ENCODE measurements at regions of chr1 and their contacts with region 1.

Region 1: GRCh38 chr1:47179017-47179987 is 10.5 kb downstream of the PDZK1IP1 start:
- DNase-seq: peak; percentile 83
- H3K4me3 ChIP-seq: peak overlapping the region; percentile 61
- H3K27ac ChIP-seq: no peak overlapping the region
- H3K27me3 ChIP-seq: peaks cover 8% of the 10 kb centered on the region
- CTCF ChIP-seq: peak; percentile 96

Region 2: DNA sequence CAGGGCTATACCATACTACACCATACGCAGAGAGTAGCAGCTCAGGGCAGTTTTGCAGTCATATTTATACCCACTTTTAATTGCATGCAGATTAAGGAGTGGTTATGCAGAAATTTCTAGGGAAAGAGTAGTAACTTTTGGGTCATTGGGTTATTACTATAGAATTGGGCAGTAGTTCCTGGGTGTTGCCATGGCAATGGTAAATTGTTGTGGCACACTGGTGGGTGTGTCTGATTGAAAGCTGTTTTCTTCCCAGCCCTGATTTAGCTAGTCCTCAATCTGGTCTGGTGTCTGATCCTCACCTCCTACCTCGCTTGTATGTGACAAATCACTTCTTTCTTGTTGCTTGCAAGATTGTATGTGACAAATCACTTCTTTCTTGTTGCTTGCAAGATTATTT is 268.5 kb before region 1 on chr1:
- CTCF ChIA-PET with region 1: no interaction called
- POLR2A ChIA-PET with region 1: no interaction called
- DNase-seq: no peak
- H3K4me3 ChIP-seq: no peak overlapping the region
- H3K27ac ChIP-seq: no peak overlapping the region
- H3K27me3 ChIP-seq: no peaks in the 10 kb centered on the region
- CTCF ChIP-seq: no peak

Region 3: GRCh38 chr1:47192458-47193384 is 13.4 kb after region 1 on chr1:
- CTCF ChIA-PET with region 1: interaction called, 127 read pairs
- POLR2A ChIA-PET with region 1: interaction called, 5 read pairs
- DNase-seq: peak; percentile 32
- H3K4me3 ChIP-seq: no peak overlapping the region
- H3K27ac ChIP-seq: no peak overlapping the region
- H3K27me3 ChIP-seq: peaks cover 7% of the 10 kb centered on the region
- CTCF ChIP-seq: peak; percentile 96

Region 4: GRCh38 chr1:47257224-47257623 is 77.9 kb after region 1 on chr1:
- CTCF ChIA-PET with region 1: interaction called, 118 read pairs
- POLR2A ChIA-PET with region 1: no interaction called
- DNase-seq: no peak
- H3K4me3 ChIP-seq: no peak overlapping the region
- H3K27ac ChIP-seq: no peak overlapping the region
- H3K27me3 ChIP-seq: no peaks in the 10 kb centered on the region
- CTCF ChIP-seq: no peak

Region 5: DNA sequence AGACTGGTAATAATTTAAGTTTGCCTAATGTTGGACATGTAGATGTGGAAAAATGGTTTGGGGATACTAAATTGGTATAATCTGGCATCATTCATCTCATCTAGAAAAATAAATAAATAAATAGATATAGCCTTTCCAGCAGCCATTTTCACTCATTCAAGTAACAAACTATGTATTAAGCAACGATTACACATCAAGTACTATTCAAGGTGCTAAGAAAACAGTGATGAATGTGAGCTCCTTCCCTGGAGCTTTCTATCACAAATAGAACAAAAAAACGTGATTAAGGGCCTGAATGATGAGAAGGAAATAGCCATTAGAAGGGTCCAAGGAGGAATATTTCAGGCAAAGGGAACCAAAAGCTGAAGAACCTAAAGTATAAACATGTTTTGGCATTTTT is 97.5 kb after region 1 on chr1:
- CTCF ChIA-PET with region 1: interaction called, 11 read pairs
- POLR2A ChIA-PET with region 1: no interaction called
- DNase-seq: no peak
- H3K4me3 ChIP-seq: no peak overlapping the region
- H3K27ac ChIP-seq: no peak overlapping the region
- H3K27me3 ChIP-seq: no peaks in the 10 kb centered on the region
- CTCF ChIP-seq: no peak

Region 6: GRCh38 chr1:47432071-47433036 is 253.1 kb after region 1 on chr1:
- CTCF ChIA-PET with region 1: interaction called, 53 read pairs
- POLR2A ChIA-PET with region 1: no interaction called
- DNase-seq: no peak
- H3K4me3 ChIP-seq: peak overlapping the region; percentile 25
- H3K27ac ChIP-seq: peak overlapping the region; percentile 82
- H3K27me3 ChIP-seq: no peaks in the 10 kb centered on the region
- CTCF ChIP-seq: peak; percentile 88

Region 7: DNA sequence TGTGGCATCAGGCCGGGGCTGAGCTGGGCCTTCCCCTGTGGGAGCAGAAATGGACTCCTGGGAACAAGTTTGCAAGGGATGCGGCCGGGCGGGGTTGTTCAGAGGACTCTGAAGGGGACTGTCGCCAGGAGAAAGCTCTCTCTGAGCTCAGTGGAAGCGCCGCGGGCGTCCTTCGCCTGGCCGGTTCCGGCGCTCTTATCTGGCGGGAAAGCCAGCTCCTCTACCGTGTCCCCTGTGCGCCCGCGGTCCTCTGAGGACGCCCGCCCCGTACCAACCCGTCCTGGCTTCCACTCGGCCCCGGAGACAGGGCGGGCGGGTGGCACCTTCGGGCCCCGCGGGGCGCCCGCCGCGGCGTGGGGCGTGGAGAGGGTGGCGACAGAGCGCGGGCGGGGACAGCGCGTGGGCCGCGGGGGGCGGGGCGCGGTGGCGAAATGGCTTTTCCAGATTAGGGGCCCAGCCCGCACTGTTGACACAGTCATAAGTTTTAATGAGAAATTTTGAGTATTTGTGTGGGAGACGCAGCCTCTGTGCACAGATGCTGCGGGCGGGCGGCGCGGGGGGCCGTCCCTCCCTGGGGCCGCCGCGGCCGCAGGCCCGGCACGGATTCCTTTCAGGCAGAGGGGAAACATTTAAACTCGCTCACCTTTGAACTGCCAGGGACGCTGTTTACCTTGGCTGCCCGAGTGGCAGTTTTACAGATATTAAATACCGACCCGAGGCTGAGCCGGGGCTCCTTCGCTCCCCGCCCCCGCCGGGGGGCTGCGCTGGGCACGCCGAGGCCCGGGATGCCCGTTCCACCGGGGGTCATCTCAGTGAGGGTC is 328.8 kb after region 1 on chr1:
- CTCF ChIA-PET with region 1: no interaction called
- POLR2A ChIA-PET with region 1: no interaction called
- DNase-seq: no peak
- H3K4me3 ChIP-seq: no peak overlapping the region
- H3K27ac ChIP-seq: no peak overlapping the region
- H3K27me3 ChIP-seq: peaks cover 38% of the 10 kb centered on the region
- CTCF ChIP-seq: no peak

Region 8: GRCh38 chr1:47710329-47711071 is 531.2 kb after region 1 on chr1:
- CTCF ChIA-PET with region 1: interaction called, 14 read pairs
- POLR2A ChIA-PET with region 1: no interaction called
- DNase-seq: no peak
- H3K4me3 ChIP-seq: no peak overlapping the region
- H3K27ac ChIP-seq: no peak overlapping the region
- H3K27me3 ChIP-seq: peaks cover 64% of the 10 kb centered on the region
- CTCF ChIP-seq: peak; percentile 94